Mammary epithelial cell (primary cell): ENCODE measurements at regions of chr6 and their contacts with region 1.

Region 1: GRCh38 chr6:116100419-116101301 is at the start of gene NT5DC1:
- DNase-seq: peak; percentile 81
- H3K4me3 ChIP-seq: peak within 1 kb of the TSS; percentile 71 to 92 (median 88)
- H3K27ac ChIP-seq: peak within 1 kb of the TSS; percentile 78
- H3K4me1 ChIP-seq: peaks cover 16% of the 10 kb centered on the region
- H3K27me3 ChIP-seq: no peaks in the 10 kb centered on the region
- CTCF ChIP-seq: peak; percentile 19 to 50
- total RNA-seq, gene NT5DC1: 11.3 to 47.6 TPM

Region 2: DNA sequence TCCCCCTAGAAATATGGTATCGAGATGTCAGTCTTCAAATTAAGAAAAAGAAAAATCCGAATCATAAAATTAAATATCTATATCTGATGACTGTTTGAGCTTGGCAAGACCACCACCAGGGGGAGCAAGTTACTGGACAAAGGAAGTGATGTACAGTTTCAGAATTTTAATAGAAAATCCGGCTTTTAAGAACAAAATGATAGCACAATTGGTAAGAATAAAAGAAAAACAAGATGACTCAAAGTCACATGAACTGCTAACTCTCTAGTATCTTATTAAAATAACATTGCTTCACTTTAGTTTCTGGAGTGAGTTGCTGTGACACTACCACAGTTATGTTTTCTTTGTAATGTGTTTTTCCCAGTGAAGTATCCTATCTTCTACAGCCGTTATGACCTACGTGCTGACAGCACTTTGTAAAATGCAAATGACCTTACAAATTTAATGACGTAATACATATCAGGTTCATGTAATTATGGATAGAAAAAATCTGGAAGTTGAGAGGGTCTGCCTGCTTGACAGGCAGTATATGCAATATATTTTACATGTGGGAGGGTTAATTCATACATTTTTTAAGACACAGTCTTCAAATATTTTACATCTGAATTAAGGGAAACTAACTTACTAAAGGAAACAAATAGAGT is 1352.6 kb before region 1 on chr6:
- CTCF ChIA-PET with region 1: no interaction called
- dilution Hi-C with region 1: no loop called
- in situ Hi-C with region 1: no loop called
- intact Hi-C with region 1: loop called (anchors 10 kb)
- DNase-seq: peak; percentile 25
- H3K4me3 ChIP-seq: no peak overlapping the region
- H3K27ac ChIP-seq: no peak overlapping the region
- H3K4me1 ChIP-seq: no peaks in the 10 kb centered on the region
- H3K27me3 ChIP-seq: no peaks in the 10 kb centered on the region
- CTCF ChIP-seq: peak; percentile 75 to 78

Region 3: GRCh38 chr6:115896538-115897129 is 204.0 kb before region 1 on chr6:
- CTCF ChIA-PET with region 1: interaction called, 5 read pairs
- dilution Hi-C with region 1: no loop called
- in situ Hi-C with region 1: no loop called
- intact Hi-C with region 1: loop called (anchors 5 kb)
- DNase-seq: peak; percentile 19
- H3K4me3 ChIP-seq: no peak overlapping the region
- H3K27ac ChIP-seq: no peak overlapping the region
- H3K4me1 ChIP-seq: no peaks in the 10 kb centered on the region
- H3K27me3 ChIP-seq: no peaks in the 10 kb centered on the region
- CTCF ChIP-seq: peak; percentile 84 to 85

Region 4: GRCh38 chr6:116010790-116011401 is 89.8 kb before region 1 on chr6:
- CTCF ChIA-PET with region 1: interaction called, 26 read pairs
- dilution Hi-C with region 1: no loop called
- in situ Hi-C with region 1: loop called (anchors 5 kb)
- intact Hi-C with region 1: loop called (anchors 1 kb)
- DNase-seq: peak; percentile 58
- H3K4me3 ChIP-seq: no peak overlapping the region
- H3K27ac ChIP-seq: peak overlapping the region; percentile 73
- H3K4me1 ChIP-seq: peaks cover 47% of the 10 kb centered on the region
- H3K27me3 ChIP-seq: no peaks in the 10 kb centered on the region
- CTCF ChIP-seq: peak; percentile 76 to 91

Region 5: GRCh38 chr6:116060572-116061283 is 39.9 kb before region 1 on chr6 and contains the start of gene FRK:
- CTCF ChIA-PET with region 1: interaction called, 5 read pairs
- dilution Hi-C with region 1: no loop called
- in situ Hi-C with region 1: no loop called
- intact Hi-C with region 1: loop called (anchors 2 kb)
- DNase-seq: peak; percentile 92
- H3K4me3 ChIP-seq: peak within 1 kb of the TSS; percentile 44 to 69 (median 61)
- H3K27ac ChIP-seq: peak within 1 kb of the TSS; percentile 84
- H3K4me1 ChIP-seq: peaks cover 12% of the 10 kb centered on the region
- H3K27me3 ChIP-seq: no peaks in the 10 kb centered on the region
- CTCF ChIP-seq: peak; percentile 34 to 40
- total RNA-seq, gene FRK: 3.2 to 6.2 TPM

Region 6: DNA sequence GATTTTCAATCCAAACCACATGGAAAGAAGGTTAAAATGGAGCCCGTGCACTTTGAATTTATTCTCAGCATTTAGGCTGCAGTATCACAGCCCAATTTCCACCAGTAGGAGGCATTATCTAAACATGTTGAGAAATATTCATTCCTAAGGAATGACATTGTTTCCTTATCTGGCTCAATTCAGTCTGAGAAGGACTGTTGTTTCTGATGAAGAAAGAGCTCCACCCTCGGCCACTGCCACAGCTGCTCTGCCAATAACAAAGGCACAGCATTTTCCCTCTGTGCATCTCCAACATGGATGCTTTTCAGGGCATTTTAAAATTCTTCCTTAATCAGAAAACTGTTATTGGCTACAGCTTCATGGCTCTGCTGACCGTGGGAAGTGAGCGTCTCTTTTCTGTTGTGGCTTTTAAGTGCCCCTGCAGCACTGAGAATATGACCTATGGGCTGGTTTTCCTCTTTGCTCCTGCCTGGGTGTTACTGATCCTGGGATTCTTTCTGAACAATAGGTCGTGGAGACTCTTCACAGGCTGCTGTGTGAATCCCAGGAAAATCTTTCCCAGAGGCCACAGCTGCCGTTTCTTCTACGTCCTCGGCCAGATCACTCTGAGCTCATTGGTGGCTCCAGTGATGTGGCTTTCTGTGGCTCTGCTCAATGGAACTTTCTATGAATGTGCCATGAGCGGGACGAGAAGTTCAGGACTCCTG is 410.9 kb after region 1 on chr6 and contains the start of gene CALHM5:
- CTCF ChIA-PET with region 1: no interaction called
- dilution Hi-C with region 1: no loop called
- in situ Hi-C with region 1: no loop called
- intact Hi-C with region 1: no loop called
- DNase-seq: peak; percentile 76
- H3K4me3 ChIP-seq: no peak within 1 kb of the TSS
- H3K27ac ChIP-seq: no peak within 1 kb of the TSS
- H3K4me1 ChIP-seq: peaks cover 23% of the 10 kb centered on the region
- H3K27me3 ChIP-seq: no peaks in the 10 kb centered on the region
- CTCF ChIP-seq: peak; percentile 69 to 77
- total RNA-seq, gene CALHM5: 0.05 to 0.50 TPM

Region 7: DNA sequence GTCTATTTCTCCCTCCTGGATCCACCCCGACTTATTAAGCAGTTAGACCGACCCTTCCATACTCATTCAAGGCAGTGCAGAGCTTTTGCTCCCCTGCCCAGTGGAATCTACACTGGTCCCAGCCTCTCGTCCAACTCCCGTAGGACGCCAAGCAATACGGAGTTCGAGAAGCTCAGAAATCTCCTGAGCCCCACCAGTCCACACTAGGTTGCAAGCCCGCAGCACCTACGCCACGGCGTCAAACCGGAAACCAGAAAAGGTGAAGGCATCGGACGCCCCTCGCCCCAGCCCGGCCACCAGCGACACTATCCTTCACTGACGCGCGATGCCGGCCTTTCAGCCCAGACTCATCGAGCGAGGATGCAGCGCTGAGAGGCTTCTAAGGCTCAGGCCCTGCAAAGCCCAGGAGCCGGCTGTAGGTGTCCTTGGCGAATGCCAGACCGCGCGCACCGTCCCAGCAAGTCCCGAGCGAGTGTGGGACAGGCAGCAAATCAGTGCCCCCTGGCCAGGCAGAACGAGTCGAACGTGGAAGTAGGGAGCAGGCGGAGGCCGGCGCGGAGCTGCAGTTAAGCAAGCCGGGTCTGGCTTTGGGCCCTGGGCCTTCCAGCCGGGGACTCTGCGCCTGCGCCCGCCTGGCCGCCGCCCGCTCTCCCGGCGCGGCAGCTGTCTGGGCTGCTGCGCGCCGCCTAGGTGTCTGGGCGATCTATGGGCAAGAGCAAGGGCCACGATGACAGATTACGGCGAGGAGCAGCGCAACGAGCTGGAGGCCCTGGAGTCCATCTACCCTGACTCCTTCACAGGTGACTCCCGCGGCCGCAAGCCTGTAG is 470.4 kb after region 1 on chr6 and contains the start of gene RWDD1:
- CTCF ChIA-PET with region 1: no interaction called
- dilution Hi-C with region 1: no loop called
- in situ Hi-C with region 1: no loop called
- intact Hi-C with region 1: loop called (anchors 10 kb)
- DNase-seq: peak; percentile 99
- H3K4me3 ChIP-seq: peak within 1 kb of the TSS; percentile 92 to 99 (median 92)
- H3K27ac ChIP-seq: peak within 1 kb of the TSS; percentile 79
- H3K4me1 ChIP-seq: peaks cover 13% of the 10 kb centered on the region
- H3K27me3 ChIP-seq: no peaks in the 10 kb centered on the region
- CTCF ChIP-seq: peak in 1 of 2 donors; percentile 22
- total RNA-seq, gene RWDD1: 27.0 to 44.7 TPM